Heart right ventricle (tissue), 16 donors: ENCODE measurements at regions of chr16 and their contacts with region 1.

Region 1: DNA sequence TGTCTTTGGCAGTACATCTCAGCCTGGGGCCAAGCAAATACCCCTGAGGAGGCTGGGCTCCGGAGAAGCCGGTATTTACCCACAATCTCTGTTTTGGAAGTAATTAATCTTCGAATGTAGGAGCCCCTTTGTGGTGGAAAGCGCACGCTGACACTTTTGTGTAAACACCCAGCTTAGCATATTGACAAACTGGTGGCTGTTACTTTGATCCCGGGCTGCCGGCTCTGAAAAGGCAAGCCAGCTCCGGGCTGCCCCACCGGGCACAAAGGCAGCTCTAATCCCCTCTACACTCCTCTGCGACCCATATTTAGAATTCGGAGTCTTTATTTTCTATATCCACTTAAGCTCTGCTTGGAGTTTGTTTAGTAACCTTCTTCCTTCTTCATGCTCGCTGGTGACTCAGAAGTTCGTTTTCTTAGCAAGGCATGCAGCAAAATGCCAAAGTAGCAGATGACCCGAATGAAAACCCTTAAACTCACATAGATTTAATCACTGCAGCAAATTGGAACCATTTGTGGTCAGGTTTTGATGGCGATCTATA is 144.0 kb upstream of the IRX3 start:
- DNase-seq: no peak
- ATAC-seq: no peak
- H3K4me3 ChIP-seq: no peak overlapping the region
- H3K27ac ChIP-seq: no peak overlapping the region
- H3K4me1 ChIP-seq: peaks cover 0 to 4% (median 0%) of the 10 kb centered on the region in 9 donors
- H3K27me3 ChIP-seq: peaks cover 0 to 25% (median 5%) of the 10 kb centered on the region in 7 donors
- CTCF ChIP-seq: no peak

Region 2: DNA sequence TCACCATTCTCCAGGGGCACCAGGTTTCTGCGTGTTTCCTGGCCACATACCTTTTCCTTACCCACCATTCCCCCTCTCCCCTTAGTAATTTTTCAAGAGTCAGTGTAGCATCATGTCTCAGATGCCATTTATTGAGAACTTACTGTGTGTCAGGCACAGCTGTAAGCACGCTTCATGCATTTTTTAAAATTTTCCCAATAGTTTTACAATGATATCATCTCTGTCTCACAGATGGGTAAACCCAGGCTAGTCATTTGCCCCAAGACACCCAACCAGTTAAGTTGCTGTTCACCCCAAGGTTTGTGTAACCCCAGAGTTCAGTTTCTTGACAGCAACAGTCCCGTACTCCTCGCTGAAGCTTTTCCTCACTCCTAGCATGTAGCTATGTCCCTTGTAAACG is 87.6 kb before region 1 on chr16:
- intact Hi-C with region 1: no loop called
- DNase-seq: no peak
- ATAC-seq: no peak
- H3K4me3 ChIP-seq: no peak overlapping the region
- H3K27ac ChIP-seq: no peak overlapping the region
- H3K4me1 ChIP-seq: no peaks in the 10 kb centered on the region
- H3K27me3 ChIP-seq: peaks cover 0 to 9% (median 0%) of the 10 kb centered on the region in 7 donors
- CTCF ChIP-seq: no peak

Region 3: GRCh38 chr16:54373534-54374520 is 56.7 kb before region 1 on chr16:
- intact Hi-C with region 1: loop called in 2 of 10 experiments (anchors 10 kb)
- DNase-seq: no peak
- ATAC-seq: no peak
- H3K4me3 ChIP-seq: peak overlapping the region in 4 of 10 donors; percentile 5 to 21 (median 14)
- H3K27ac ChIP-seq: no peak overlapping the region
- H3K4me1 ChIP-seq: peaks cover 0 to 14% (median 5%) of the 10 kb centered on the region in 9 donors
- H3K27me3 ChIP-seq: peaks cover 0 to 41% (median 0%) of the 10 kb centered on the region in 7 donors
- CTCF ChIP-seq: no peak

Region 4: DNA sequence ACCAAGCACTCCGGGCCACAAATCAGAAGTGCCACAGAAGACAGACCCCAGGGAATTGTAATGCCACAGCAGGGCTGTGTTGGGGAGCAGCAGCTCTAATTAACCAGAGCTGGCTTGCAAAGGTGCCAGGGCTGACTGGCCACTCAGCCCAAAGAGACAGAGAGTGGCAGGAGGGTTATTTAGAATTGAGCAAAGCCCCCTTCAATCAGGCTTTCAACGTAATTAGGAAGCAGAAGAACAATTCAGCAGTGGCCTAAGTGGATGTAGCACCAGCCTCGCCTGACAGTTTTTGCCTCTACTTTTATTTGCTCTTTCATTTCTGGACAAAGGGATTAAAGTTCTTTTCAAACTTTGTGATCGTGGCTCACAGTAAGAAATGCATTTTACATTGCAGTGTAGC is 134.3 kb after region 1 on chr16:
- intact Hi-C with region 1: no loop called
- DNase-seq: no peak
- ATAC-seq: no peak
- H3K4me3 ChIP-seq: no peak overlapping the region
- H3K27ac ChIP-seq: no peak overlapping the region
- H3K4me1 ChIP-seq: no peaks in the 10 kb centered on the region
- H3K27me3 ChIP-seq: no peaks in the 10 kb centered on the region
- CTCF ChIP-seq: no peak